BJ (cell line): ENCODE measurements at regions of chr11 and their contacts with region 1.

Region 1: DNA sequence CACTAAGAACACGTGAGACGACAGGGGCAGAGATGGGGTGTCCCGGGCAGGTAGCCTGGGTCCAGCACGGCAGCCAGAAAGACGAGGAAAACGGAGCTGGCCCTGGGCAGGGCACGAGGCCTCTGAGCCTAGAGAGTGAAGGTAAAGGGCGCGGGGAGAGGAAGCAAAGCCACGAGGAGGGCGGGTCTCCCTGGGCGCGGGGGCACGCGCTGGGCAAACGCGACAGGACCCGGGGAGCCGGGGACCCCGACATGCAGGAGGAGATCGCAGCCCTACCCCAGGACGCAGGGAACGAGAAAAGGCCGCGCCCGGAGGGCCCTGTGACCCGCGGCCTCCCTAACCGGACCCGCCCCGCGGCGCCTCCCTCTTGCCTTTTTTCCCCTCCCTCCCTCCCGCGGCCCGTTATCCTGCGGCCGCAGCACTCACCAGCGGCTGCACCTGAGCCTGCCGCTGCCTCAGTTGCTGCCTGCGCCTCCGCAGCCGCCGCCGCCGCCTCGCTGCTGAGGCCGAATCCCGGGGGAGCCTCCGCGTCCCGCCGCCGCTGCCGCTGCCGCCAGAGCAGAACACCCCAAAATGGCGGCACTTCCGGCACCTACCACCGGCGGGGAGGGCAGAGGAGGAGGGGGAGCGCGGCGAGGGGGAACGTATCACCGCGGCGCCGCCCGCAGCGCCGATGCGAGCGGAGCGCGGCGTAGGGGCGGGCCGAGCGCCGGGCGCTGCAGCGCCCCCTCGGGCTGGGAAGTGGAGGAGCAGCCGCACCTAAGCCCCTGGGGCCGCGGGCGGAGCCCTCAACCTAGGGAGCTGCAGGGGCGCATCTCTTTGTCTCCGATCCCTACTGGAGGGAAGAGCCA is at the start of gene CELF1:
- DNase-seq: no peak
- H3K4me3 ChIP-seq: peak within 1 kb of the TSS; percentile 85
- H3K27me3 ChIP-seq: no peaks in the 10 kb centered on the region
- CTCF ChIP-seq: peak; percentile 65
- polyA plus RNA-seq, gene CELF1: 73.5 and 85.4 TPM in 2 replicates

Region 2: GRCh38 chr11:47538741-47539574 is 13.8 kb before region 1 on chr11:
- CTCF ChIA-PET with region 1: interaction called, 45 read pairs
- POLR2A ChIA-PET with region 1: no interaction called
- DNase-seq: no peak
- H3K4me3 ChIP-seq: no peak overlapping the region
- H3K27me3 ChIP-seq: no peaks in the 10 kb centered on the region
- CTCF ChIP-seq: no peak

Region 3: DNA sequence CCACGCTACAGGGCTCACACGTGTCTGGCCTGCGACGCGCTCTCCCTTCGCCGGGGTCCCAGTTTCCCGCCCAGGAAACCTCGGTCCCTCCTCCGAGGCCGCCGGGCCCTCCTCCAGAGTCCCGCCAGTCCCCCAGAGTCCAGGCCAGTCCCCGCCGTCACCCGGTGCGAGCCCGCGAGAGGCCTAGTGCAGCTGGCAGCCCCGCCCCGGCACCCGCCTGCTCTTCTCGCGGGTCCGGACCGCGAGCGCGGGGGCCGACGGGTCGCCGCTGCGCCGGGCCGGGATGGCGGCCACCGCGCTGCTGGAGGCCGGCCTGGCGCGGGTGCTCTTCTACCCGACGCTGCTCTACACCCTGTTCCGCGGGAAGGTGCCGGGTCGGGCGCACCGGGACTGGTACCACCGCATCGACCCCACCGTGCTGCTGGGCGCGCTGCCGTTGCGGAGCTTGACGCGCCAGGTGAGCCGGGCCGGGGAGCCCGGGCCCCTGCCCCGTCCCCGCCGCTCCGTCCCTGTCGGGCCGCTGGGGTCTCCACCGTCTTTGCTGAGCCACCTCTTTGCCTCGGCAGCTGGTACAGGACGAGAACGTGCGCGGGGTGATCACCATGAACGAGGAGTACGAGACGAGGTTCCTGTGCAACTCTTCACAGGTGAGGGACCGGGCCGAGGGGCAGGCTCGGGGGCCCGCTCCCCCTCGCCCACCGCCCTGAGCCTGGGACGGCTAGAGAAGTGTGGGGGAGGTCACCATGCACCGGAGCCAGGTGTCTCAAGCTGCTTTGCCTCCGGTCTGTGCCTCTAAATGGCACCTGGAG is 12.8 kb after region 1 on chr11 and contains the start of gene PTPMT1:
- CTCF ChIA-PET with region 1: interaction called, 12 read pairs
- POLR2A ChIA-PET with region 1: no interaction called
- DNase-seq: no peak
- H3K4me3 ChIP-seq: peak within 1 kb of the TSS; percentile 68
- H3K27me3 ChIP-seq: no peaks in the 10 kb centered on the region
- CTCF ChIP-seq: no peak
- polyA plus RNA-seq, gene PTPMT1: 61.9 and 69.4 TPM in 2 replicates

Region 4: GRCh38 chr11:47656260-47656885 is 103.6 kb after region 1 on chr11:
- CTCF ChIA-PET with region 1: no interaction called
- POLR2A ChIA-PET with region 1: no interaction called
- DNase-seq: no peak
- H3K4me3 ChIP-seq: no peak overlapping the region
- H3K27me3 ChIP-seq: no peaks in the 10 kb centered on the region
- CTCF ChIP-seq: no peak